ENCODE measurements at regions of chr19 and their contacts with region 1.

Region 1: DNA sequence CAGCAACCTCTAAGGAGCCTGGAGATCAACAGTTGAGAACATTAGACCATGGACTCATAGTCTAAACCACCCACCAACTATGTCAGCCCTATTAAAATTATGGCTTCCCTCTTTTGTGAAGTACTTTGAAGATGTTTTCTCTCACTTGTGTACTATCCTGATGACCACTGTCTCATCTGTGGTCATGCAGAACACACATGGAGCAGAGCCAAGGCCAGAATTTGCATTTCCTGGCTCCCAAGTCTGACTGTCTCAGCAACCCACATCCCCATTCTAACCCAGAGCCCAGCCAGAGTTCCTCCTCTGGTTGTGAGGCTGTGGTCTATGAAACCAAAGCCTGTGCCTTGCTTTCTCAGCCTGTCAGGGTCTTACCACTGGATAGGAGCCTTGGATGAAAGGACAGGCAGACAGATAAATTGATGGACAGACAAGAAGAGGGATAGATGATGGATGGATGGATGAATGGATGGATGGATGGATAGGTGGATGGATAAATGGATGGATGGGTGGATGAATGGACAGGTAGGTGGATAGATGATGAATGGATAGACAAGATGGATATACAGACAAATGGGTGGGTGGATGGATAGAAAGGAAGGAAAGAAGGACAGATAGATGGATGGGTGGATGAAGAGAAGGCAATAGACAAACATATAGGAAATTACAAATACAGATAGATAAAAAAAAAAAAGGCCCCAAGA is 35.4 kb downstream of the ZNF557 start:
- DNase-seq: no peak
- ATAC-seq: no peak
- H3K4me3 ChIP-seq: no peak overlapping the region
- H3K27ac ChIP-seq: no peak overlapping the region
- H3K4me1 ChIP-seq: peaks cover 0 to 2% of the 10 kb centered on the region in 2 experiments; a peak in 1 of 5 replicates
- H3K27me3 ChIP-seq: peaks cover 2 to 15% of the 10 kb centered on the region in 2 experiments; a peak in 2 of 5 replicates
- CTCF ChIP-seq: no peak
- EP300 ChIP-seq: no peak
- POLR2A ChIP-seq: no peak
- RAD21 ChIP-seq: no peak

Region 2: GRCh38 chr19:7326105-7326877 is 221.4 kb after region 1 on chr19:
- CTCF ChIA-PET with region 1: interaction called, 5 read pairs
- POLR2A ChIA-PET with region 1: no interaction called
- in situ Hi-C with region 1: loop called (anchors 10 kb)
- intact Hi-C with region 1: loop called (anchors 1 kb)
- DNase-seq: peak; percentile 55 to 74 (median 70)
- ATAC-seq: peak; percentile 82
- H3K4me3 ChIP-seq: no peak overlapping the region
- H3K27ac ChIP-seq: no peak overlapping the region
- H3K4me1 ChIP-seq: no peaks in the 10 kb centered on the region; a peak in 1 of 5 replicates
- H3K27me3 ChIP-seq: peaks cover 0 to 8% of the 10 kb centered on the region in 2 experiments; a peak in 1 of 5 replicates
- CTCF ChIP-seq: peak; percentile 67 to 76 (median 70)
- EP300 ChIP-seq: no peak
- POLR2A ChIP-seq: no peak
- RAD21 ChIP-seq: peak in 1 of 2 experiments; percentile 60; a peak in 2 of 4 replicates

Measured in K562 (cell line).